Right cardiac atrium (tissue), 5 donors: ENCODE measurements at regions of chr5 and their contacts with region 1.

Region 1: GRCh38 chr5:178461004-178461730 is 129.0 kb downstream of the COL23A1 start:
- DNase-seq: peak; percentile 78 to 94 (median 94)
- ATAC-seq: peak; percentile 92 to 96
- H3K4me3 ChIP-seq: no peak overlapping the region
- H3K27ac ChIP-seq: no peak overlapping the region
- H3K4me1 ChIP-seq: peaks cover 2% of the 10 kb centered on the region
- H3K27me3 ChIP-seq: no peaks in the 10 kb centered on the region

Region 2: DNA sequence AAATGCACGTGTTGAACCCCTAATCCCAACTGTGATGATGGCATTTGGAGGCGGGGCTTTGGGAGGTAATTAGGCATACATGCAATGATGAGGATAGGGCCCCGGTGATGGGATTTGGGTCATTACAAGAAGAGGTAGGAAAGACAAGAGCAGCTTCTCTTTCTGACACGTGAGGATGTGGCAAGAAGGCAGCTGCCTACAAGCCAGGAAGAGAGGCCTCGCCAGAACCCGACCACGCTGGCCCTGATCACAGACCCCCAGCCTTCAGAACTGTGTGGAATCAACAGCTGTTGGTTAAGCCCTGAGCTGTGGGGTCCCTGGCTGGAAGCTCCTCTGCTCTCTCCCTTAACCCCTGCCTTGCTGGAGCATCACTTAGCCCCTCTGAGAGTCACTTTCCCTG is 71.5 kb after region 1 on chr5:
- intact Hi-C with region 1: loop called in 1 of 4 experiments (anchors 5 kb)
- DNase-seq: no peak
- ATAC-seq: no peak
- H3K4me3 ChIP-seq: no peak overlapping the region
- H3K27ac ChIP-seq: no peak overlapping the region
- H3K4me1 ChIP-seq: peaks cover 6% of the 10 kb centered on the region
- H3K27me3 ChIP-seq: no peaks in the 10 kb centered on the region

Region 3: DNA sequence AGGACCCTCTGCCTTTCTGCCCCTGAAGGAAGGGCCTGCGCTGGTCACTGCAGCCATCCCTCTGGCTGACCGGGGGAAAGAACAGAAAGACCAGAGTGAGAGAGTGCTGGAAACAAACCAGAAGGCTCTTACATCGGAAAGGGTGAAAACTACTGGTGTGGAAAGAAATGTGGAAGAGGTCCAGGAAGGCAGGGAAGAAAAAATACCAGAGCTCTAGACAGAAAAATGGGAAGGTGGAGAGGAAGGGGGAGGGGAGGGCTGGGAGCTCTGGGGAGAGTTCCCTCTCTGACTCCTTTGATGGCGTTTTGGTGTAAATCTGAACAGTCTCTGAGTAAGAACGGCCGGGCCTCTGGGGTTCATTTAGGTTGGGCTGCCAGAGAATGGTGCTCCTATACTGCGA is 81.3 kb after region 1 on chr5:
- intact Hi-C with region 1: loop called in 2 of 4 experiments (anchors 5 to 10 kb)
- DNase-seq: no peak
- ATAC-seq: peak; percentile 41 to 46
- H3K4me3 ChIP-seq: no peak overlapping the region
- H3K27ac ChIP-seq: no peak overlapping the region
- H3K4me1 ChIP-seq: no peaks in the 10 kb centered on the region
- H3K27me3 ChIP-seq: no peaks in the 10 kb centered on the region

Region 4: GRCh38 chr5:178551059-178551458 is 89.9 kb after region 1 on chr5:
- intact Hi-C with region 1: loop called in 2 of 4 experiments (anchors 5 to 10 kb)
- DNase-seq: no peak
- ATAC-seq: no peak
- H3K4me3 ChIP-seq: no peak overlapping the region
- H3K27ac ChIP-seq: no peak overlapping the region
- H3K4me1 ChIP-seq: no peaks in the 10 kb centered on the region
- H3K27me3 ChIP-seq: no peaks in the 10 kb centered on the region